ENCODE measurements at regions of chr4 and their contacts with region 1.

Region 1: GRCh38 chr4:140359562-140360427 is 13.7 kb upstream of the SCOC start:
- DNase-seq: peak; percentile 45 to 85
- ATAC-seq: peak; percentile 97 to 100
- H3K4me3 ChIP-seq: no peak overlapping the region
- H3K27ac ChIP-seq: no peak overlapping the region
- H3K4me1 ChIP-seq: no peaks in the 10 kb centered on the region
- CTCF ChIP-seq: peak; percentile 88
- EP300 ChIP-seq: no peak
- POLR2A ChIP-seq: no peak
- RAD21 ChIP-seq: peak; percentile 57 to 76

Region 2: DNA sequence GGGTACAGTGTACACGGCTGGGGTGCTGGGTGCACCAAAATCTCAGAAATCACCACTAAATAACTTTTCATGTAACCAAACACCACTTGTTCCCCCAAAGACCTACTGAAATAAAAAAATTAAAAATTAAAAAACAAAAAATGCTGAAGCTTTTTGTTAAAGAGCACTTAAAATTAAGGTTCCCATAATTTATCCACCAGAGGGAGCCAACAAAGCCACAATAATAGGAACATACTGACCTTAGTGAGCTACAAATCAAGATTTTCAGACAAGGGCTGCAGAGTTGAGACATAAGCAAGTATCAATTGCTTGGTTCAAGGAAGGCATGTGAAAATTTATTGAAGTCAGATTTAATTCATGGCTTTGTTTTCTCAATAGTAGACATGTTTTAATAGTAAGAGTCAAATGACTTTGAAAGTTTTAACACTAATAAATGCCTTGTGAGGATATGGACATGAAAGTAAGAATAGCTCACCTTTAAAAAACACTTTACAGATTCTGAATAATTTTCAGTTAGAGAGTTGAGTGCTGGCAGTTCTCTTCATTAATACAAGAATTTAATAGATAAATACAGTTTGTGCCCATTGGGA is 29.4 kb before region 1 on chr4:
- CTCF ChIA-PET with region 1: interaction called, 10 read pairs
- POLR2A ChIA-PET with region 1: no interaction called
- DNase-seq: peak; percentile 18 to 41
- ATAC-seq: peak in 1 of 2 experiments; percentile 62; a peak in 2 of 6 replicates
- H3K4me3 ChIP-seq: no peak overlapping the region
- H3K27ac ChIP-seq: no peak overlapping the region
- H3K4me1 ChIP-seq: no peaks in the 10 kb centered on the region
- CTCF ChIP-seq: peak; percentile 56
- EP300 ChIP-seq: no peak
- POLR2A ChIP-seq: no peak
- RAD21 ChIP-seq: peak; percentile 27 to 37; a peak in 3 of 5 replicates

Region 3: GRCh38 chr4:140427106-140427961 is 67.5 kb after region 1 on chr4 and contains the start of gene CLGN:
- CTCF ChIA-PET with region 1: interaction called, 13 read pairs
- POLR2A ChIA-PET with region 1: no interaction called
- DNase-seq: peak; percentile 63 to 77
- ATAC-seq: peak; percentile 95 to 97
- H3K4me3 ChIP-seq: peak within 1 kb of the TSS; percentile 80
- H3K27ac ChIP-seq: peak within 1 kb of the TSS; percentile 82 to 89
- H3K4me1 ChIP-seq: peaks cover 9% of the 10 kb centered on the region; the same call in 2 of the 3 replicates
- CTCF ChIP-seq: peak; percentile 45
- EP300 ChIP-seq: no peak
- POLR2A ChIP-seq: peak; percentile 48; the same call in 1 of the 2 replicates
- RAD21 ChIP-seq: no peak; a peak in 1 of 5 replicates
- polyA plus RNA-seq, gene CLGN: 20.6 and 30.9 TPM in 2 replicates

Region 4: DNA sequence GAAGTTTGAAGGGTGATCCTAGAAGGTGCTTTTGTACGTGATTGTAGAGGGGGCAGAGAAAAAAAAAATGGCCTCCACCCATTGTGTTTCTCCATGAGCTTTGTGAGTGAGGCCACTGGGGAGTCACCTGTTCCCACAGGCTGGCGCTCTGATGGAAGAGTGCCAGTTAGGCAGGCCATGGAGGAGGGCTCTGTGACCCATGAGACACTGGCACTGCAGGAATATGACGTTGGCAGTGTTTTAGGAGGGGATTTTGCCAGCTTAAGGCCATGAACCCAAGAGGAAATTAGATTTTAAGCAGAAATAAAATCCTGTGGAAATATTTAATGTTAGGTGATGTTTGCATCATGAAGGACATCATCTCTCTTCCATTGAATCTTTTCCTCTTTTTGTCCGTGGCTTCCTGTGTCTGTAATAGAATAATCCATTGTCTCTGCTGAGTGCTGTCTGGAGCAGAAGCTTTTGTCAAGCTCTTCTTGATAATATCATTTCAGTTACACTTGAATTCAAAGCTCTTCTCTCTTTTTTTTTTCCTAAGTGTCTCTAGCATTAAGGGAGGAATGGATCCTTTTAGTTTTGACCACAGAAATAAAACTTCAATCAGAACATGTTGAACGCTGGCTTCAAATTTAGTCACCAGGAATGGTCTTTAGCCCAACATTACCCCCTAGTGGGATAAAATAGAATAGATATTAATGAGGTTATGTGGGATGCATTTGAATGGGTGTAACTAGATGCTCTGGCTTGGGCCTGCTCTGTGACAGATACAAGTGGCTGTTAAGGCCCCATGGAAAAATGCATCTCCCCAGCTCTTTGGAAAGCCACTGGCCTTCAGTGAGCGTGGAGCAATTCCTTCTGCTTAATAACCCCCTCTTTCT is 250.0 kb after region 1 on chr4:
- CTCF ChIA-PET with region 1: interaction called, 30 read pairs
- POLR2A ChIA-PET with region 1: no interaction called
- DNase-seq: peak; percentile 42 to 55
- ATAC-seq: peak; percentile 88 to 89; a peak in 5 of 6 replicates
- H3K4me3 ChIP-seq: no peak overlapping the region
- H3K27ac ChIP-seq: no peak overlapping the region
- H3K4me1 ChIP-seq: no peaks in the 10 kb centered on the region
- CTCF ChIP-seq: peak; percentile 60
- EP300 ChIP-seq: no peak
- POLR2A ChIP-seq: no peak
- RAD21 ChIP-seq: peak; percentile 65 to 74

Region 5: DNA sequence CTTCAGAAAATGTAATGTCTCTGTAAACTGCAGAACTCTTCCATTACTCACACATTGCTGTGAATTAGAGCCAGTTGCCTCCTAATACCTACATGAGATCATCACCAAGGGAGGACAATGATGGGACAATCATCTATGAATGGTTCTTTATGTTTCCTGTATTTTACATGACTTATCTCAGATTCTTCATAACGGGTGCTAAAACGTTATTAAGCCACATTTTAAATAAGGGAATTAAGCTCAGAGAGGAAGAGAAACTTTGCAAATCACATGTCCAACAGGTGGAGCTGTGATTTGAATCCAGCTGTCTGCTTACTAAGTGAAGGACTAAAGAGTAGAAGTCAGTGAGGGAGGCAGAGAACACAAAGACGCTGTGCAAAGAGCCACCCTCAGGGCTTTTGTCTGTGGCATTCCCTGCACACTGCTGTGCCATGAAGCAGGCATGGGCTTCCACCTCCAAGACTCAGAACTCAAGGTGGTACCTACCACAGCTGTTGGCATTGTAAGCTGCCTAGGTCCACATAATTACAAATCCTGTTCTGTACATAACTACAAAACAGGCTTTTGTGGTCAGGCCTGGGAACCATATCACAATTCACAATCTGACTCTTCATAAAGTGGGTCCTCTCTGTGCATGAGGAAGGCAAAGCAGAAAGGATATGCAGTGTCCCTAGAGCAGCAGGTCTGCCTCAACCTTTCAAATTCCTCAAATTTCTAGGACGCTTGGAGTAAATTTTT is 383.6 kb after region 1 on chr4:
- CTCF ChIA-PET with region 1: no interaction called
- POLR2A ChIA-PET with region 1: no interaction called
- DNase-seq: peak in 1 of 2 experiments; percentile 25
- ATAC-seq: peak; percentile 59 to 77; a peak in 4 of 6 replicates
- H3K4me3 ChIP-seq: no peak overlapping the region
- H3K27ac ChIP-seq: peak overlapping the region; percentile 13 to 58; a peak in 3 of 6 replicates
- H3K4me1 ChIP-seq: peaks cover 43% of the 10 kb centered on the region
- CTCF ChIP-seq: peak; percentile 39; the same call in 2 of the 3 replicates
- EP300 ChIP-seq: no peak
- POLR2A ChIP-seq: no peak
- RAD21 ChIP-seq: peak; percentile 13 to 17; a peak in 1 of 5 replicates

Measured in A549 (cell line).